Calu3 (cell line): ENCODE measurements at regions of chr7 and their contacts with region 1.

Region 1: DNA sequence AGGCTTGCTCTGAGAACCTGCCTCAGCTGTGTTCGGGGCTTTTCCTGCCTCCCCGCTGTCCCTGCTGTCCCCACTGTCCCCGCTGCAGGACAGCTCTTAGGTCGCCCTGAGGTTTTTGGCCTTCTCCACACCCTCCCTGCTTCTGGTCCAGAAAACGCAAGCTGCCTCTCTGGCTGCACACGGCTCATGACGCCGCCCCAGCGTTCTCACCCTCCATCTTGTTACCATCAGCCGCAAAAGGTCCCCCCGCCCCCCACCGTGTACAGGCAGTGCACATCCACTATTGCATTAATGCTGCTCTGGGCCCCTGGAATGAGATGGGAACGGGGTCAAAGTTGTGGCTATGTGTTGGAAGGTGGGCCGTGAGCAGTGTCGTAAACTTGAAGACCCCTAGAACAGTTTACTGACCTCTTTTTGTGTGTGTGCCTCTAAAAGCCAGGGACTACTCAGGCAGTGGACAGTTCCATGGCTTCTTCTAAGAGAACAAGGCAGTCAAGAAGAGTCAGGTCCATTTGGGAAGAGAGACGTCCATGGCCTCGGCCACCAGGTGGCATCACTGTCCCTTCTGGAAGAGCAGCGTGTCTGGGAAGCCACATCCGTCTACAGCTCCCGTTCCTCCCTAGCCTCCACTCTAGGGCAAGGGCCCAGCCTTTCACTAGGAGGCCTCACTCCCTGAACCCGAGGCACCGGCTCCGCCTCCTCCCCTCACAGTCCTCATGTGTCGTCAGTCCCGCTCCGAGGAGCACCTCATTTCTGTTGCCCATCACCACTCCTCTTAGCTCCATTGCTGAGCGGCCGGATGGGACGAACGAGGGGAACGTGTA is 38.5 kb upstream of the MKRN1 start:
- DNase-seq: peak; percentile 90
- H3K4me3 Mint-ChIP-seq: no peak overlapping the region
- H3K27ac Mint-ChIP-seq: no peak overlapping the region
- H3K4me1 Mint-ChIP-seq: no peaks in the 10 kb centered on the region
- H3K27me3 Mint-ChIP-seq: no peaks in the 10 kb centered on the region
- CTCF ChIP-seq: peak; percentile 85

Region 2: GRCh38 chr7:140653319-140654108 is 135.8 kb after region 1 on chr7:
- CTCF ChIA-PET with region 1: interaction called, 28 read pairs
- intact Hi-C with region 1: loop called (anchors 1 kb)
- DNase-seq: peak; percentile 71
- H3K4me3 Mint-ChIP-seq: no peak overlapping the region
- H3K27ac Mint-ChIP-seq: no peak overlapping the region
- H3K4me1 Mint-ChIP-seq: peaks cover 34% of the 10 kb centered on the region
- H3K27me3 Mint-ChIP-seq: no peaks in the 10 kb centered on the region
- CTCF ChIP-seq: peak; percentile 68

Region 3: DNA sequence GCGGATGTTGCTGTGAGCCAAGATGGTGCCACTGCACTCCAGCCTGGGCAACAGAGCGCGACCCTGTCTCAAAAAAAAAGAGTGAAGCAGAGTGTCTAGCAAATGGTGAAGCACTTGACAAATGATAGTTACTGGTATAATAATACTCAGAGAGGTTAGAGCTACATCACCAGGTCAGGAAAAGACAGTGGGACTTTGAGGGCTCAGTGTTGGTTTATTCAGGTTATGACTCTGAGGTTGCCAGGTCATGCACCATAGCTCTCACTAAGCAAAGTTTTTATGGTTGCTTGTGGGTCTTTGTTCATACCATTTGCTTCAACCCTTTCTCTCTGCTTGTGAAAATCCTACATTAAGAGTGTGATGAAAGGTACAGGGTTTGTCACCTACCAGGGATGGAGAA is 483.4 kb after region 1 on chr7:
- CTCF ChIA-PET with region 1: no interaction called
- intact Hi-C with region 1: loop called (anchors 5 kb)
- DNase-seq: no peak
- H3K4me3 Mint-ChIP-seq: no peak overlapping the region
- H3K27ac Mint-ChIP-seq: no peak overlapping the region
- H3K4me1 Mint-ChIP-seq: peaks cover 24% of the 10 kb centered on the region
- H3K27me3 Mint-ChIP-seq: no peaks in the 10 kb centered on the region
- CTCF ChIP-seq: no peak